A673 (cell line): ENCODE measurements at regions of chr2 and their contacts with region 1.

Region 1: GRCh38 chr2:72745679-72746368 is 80.0 kb downstream of the EXOC6B start:
- DNase-seq: peak; percentile 82
- H3K4me3 ChIP-seq: no peak overlapping the region
- H3K27ac ChIP-seq: no peak overlapping the region
- H3K4me1 ChIP-seq: peaks cover 17% of the 10 kb centered on the region
- H3K27me3 ChIP-seq: no peaks in the 10 kb centered on the region
- CTCF ChIP-seq: peak; percentile 83

Region 2: DNA sequence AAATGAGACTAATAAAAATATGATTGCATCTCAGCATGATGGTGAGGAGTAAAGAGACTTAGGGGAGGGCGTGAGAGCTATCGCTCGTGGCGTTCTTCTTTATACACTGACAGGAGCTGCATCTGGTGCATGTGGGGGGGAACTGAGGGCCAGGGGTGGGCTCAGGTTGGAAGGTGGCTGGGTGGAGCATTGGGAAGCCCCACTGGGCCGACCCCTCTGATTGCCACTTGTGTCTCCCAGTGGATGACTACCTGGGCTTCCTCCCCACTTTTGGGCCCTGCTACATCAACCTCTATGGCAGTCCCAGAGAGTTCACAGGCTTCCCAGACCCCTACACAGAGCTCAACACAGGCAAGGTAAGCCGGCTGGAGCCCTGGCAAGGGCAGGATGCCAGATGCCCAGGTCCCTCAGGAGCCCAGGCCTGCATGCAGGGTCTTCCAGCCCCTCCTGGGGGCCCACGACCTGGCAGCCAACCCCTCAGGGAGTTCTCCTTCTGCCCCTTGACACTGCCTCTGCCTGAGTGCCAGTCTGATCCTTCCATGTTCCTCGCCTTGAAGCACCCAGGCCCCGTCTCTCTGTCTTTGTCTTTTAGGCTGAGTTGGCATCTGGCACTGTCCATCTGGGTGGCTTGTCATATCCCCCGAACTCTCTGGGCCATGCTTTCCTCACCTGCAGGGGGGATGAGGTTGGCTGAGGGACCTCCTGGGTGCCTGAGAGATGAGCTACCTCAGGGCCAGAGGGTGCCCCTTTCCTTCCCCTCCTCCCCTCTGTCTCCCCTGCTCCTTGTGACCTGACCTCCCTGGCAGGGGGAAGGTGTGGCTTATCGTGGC is 1194.8 kb before region 1 on chr2:
- CTCF ChIA-PET with region 1: interaction called, 11 read pairs
- POLR2A ChIA-PET with region 1: no interaction called
- intact Hi-C with region 1: loop called (anchors 5 kb)
- DNase-seq: no peak
- H3K4me3 ChIP-seq: no peak overlapping the region
- H3K27ac ChIP-seq: no peak overlapping the region
- H3K4me1 ChIP-seq: no peaks in the 10 kb centered on the region
- H3K27me3 ChIP-seq: no peaks in the 10 kb centered on the region
- CTCF ChIP-seq: no peak

Region 3: DNA sequence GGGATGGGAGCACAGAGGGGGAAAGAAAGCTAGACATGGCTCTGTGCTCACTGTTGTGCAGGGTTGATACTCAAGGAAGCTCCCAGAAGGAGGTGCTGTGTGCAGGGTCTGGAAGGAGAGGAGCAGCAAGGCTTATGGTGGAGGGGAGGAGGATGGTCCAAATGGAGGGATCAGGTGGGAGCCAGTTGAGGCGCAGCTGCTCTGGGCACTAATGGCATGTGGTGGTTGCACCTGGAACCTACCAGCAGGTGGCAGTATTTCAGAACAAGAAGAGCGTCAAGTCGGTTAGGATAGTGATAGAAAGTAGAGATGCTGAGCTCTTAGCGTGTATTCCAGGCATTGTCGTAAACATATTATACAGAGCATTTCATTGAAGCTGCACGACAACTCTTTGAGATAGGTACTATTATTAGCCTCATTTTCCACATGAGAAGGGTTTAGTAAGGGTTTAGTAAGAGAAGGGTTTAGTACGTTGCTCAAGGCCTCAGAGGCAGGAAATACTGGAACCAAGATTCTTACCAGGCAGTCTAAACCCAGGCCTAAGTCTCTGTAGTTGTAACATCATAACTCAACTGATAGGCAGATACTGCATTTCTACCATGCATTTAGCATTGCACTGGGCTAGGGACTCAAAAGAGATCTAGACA is 821.8 kb before region 1 on chr2:
- CTCF ChIA-PET with region 1: no interaction called
- POLR2A ChIA-PET with region 1: no interaction called
- intact Hi-C with region 1: loop called (anchors 5 kb)
- DNase-seq: peak; percentile 82
- H3K4me3 ChIP-seq: no peak overlapping the region
- H3K27ac ChIP-seq: no peak overlapping the region
- H3K4me1 ChIP-seq: no peaks in the 10 kb centered on the region
- H3K27me3 ChIP-seq: no peaks in the 10 kb centered on the region
- CTCF ChIP-seq: peak; percentile 91

Region 4: DNA sequence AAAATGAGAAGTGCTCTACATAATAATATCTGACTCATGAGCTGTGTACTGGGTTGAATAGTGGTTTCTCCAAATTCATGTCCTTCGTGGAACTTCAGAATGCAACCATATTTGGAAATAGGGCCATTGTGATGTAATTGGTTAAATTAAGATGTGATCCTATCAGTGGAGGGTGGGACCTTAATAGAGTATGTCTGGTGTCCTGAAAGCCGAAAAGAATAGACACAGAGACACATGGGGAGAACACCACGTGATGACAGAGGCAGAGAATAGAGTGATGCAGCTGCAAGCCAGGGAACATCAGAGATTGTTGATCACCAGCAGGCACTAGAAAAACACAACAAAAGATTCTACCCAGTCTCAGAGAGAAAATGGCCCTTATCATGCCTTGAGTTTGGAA is 230.1 kb before region 1 on chr2:
- CTCF ChIA-PET with region 1: interaction called, 3 read pairs
- POLR2A ChIA-PET with region 1: no interaction called
- intact Hi-C with region 1: loop called (anchors 5 kb)
- DNase-seq: peak; percentile 97
- H3K4me3 ChIP-seq: peak overlapping the region; percentile 50
- H3K27ac ChIP-seq: peak overlapping the region; percentile 99
- H3K4me1 ChIP-seq: peaks cover 40% of the 10 kb centered on the region
- H3K27me3 ChIP-seq: no peaks in the 10 kb centered on the region
- CTCF ChIP-seq: no peak

Region 5: GRCh38 chr2:72757177-72757775 is 11.5 kb after region 1 on chr2:
- CTCF ChIA-PET with region 1: no interaction called
- POLR2A ChIA-PET with region 1: no interaction called
- intact Hi-C with region 1: no loop called
- DNase-seq: peak; percentile 30
- H3K4me3 ChIP-seq: no peak overlapping the region
- H3K27ac ChIP-seq: no peak overlapping the region
- H3K4me1 ChIP-seq: peaks cover 14% of the 10 kb centered on the region
- H3K27me3 ChIP-seq: no peaks in the 10 kb centered on the region
- CTCF ChIP-seq: no peak